Natural killer cell (primary cell): ENCODE measurements at regions of chr4 and their contacts with region 1.

Region 1: GRCh38 chr4:54217642-54218495 is 11.2 kb upstream of the PDGFRA start:
- DNase-seq: peak; percentile 36 to 80
- ATAC-seq: peak; percentile 72 to 87 (median 81)
- H3K4me3 ChIP-seq: no peak overlapping the region
- H3K4me3 Mint-ChIP-seq: no peak overlapping the region
- H3K27ac ChIP-seq: no peak overlapping the region
- H3K27ac Mint-ChIP-seq: no peak overlapping the region
- H3K4me1 ChIP-seq: peaks cover 5% of the 10 kb centered on the region
- H3K4me1 Mint-ChIP-seq: peaks cover 0 to 4% of the 10 kb centered on the region in 2 donors
- H3K27me3 ChIP-seq: peaks cover 10% of the 10 kb centered on the region
- H3K27me3 Mint-ChIP-seq: peaks cover 20 to 31% of the 10 kb centered on the region in 2 donors
- CTCF ChIP-seq: peak; percentile 84

Region 2: GRCh38 chr4:53196882-53197771 is 1020.7 kb before region 1 on chr4:
- intact Hi-C with region 1: loop called (anchors 1 kb)
- DNase-seq: peak in 1 of 2 donors; percentile 74
- ATAC-seq: peak in 1 of 3 donors; percentile 62
- H3K4me3 ChIP-seq: no peak overlapping the region
- H3K4me3 Mint-ChIP-seq: no peak overlapping the region
- H3K27ac ChIP-seq: no peak overlapping the region
- H3K27ac Mint-ChIP-seq: no peak overlapping the region
- H3K4me1 ChIP-seq: no peaks in the 10 kb centered on the region
- H3K4me1 Mint-ChIP-seq: no peaks in the 10 kb centered on the region
- H3K27me3 ChIP-seq: no peaks in the 10 kb centered on the region
- H3K27me3 Mint-ChIP-seq: no peaks in the 10 kb centered on the region
- CTCF ChIP-seq: peak; percentile 71

Region 3: GRCh38 chr4:53908661-53909078 is 309.2 kb before region 1 on chr4:
- intact Hi-C with region 1: loop called (anchors 1 kb)
- DNase-seq: peak in 1 of 2 donors; percentile 52
- ATAC-seq: peak in 2 of 3 donors; percentile 64 to 85
- H3K4me3 ChIP-seq: no peak overlapping the region
- H3K4me3 Mint-ChIP-seq: no peak overlapping the region
- H3K27ac ChIP-seq: no peak overlapping the region
- H3K27ac Mint-ChIP-seq: no peak overlapping the region
- H3K4me1 ChIP-seq: peaks cover 3% of the 10 kb centered on the region
- H3K4me1 Mint-ChIP-seq: peaks cover 16 to 23% of the 10 kb centered on the region in 2 donors
- H3K27me3 ChIP-seq: peaks cover 14% of the 10 kb centered on the region
- H3K27me3 Mint-ChIP-seq: peaks cover 29 to 53% of the 10 kb centered on the region in 2 donors
- CTCF ChIP-seq: peak; percentile 49

Region 4: GRCh38 chr4:53929955-53930798 is 287.7 kb before region 1 on chr4:
- intact Hi-C with region 1: loop called (anchors 1 kb)
- DNase-seq: peak; percentile 22 to 79
- ATAC-seq: peak; percentile 54 to 77 (median 70)
- H3K4me3 ChIP-seq: no peak overlapping the region
- H3K4me3 Mint-ChIP-seq: no peak overlapping the region
- H3K27ac ChIP-seq: no peak overlapping the region
- H3K27ac Mint-ChIP-seq: no peak overlapping the region
- H3K4me1 ChIP-seq: no peaks in the 10 kb centered on the region
- H3K4me1 Mint-ChIP-seq: no peaks in the 10 kb centered on the region
- H3K27me3 ChIP-seq: no peaks in the 10 kb centered on the region
- H3K27me3 Mint-ChIP-seq: peaks cover 0 to 7% of the 10 kb centered on the region in 2 donors
- CTCF ChIP-seq: peak; percentile 69